Breast epithelium (tissue), 4 donors: ENCODE measurements at regions of chr9 and their contacts with region 1.

Region 1: GRCh38 chr9:108746864-108747263 is 108.9 kb downstream of the ACTL7B start:
- DNase-seq: no peak
- H3K4me3 ChIP-seq: no peak overlapping the region
- H3K27ac ChIP-seq: no peak overlapping the region
- H3K4me1 ChIP-seq: no peaks in the 10 kb centered on the region
- H3K27me3 ChIP-seq: no peaks in the 10 kb centered on the region
- CTCF ChIP-seq: no peak
- POLR2A ChIP-seq: no peak

Region 2: GRCh38 chr9:108720191-108720642 is 26.6 kb before region 1 on chr9:
- intact Hi-C with region 1: loop called (anchors 1 kb)
- DNase-seq: no peak
- H3K4me3 ChIP-seq: no peak overlapping the region
- H3K27ac ChIP-seq: no peak overlapping the region
- H3K4me1 ChIP-seq: no peaks in the 10 kb centered on the region
- H3K27me3 ChIP-seq: no peaks in the 10 kb centered on the region
- CTCF ChIP-seq: no peak
- POLR2A ChIP-seq: no peak